ENCODE measurements at regions of chr16 and their contacts with region 1.

Region 1: GRCh38 chr16:75181630-75182029 is 25.3 kb downstream of the CTRB2 start:
- DNase-seq: no peak
- ATAC-seq: no peak
- H3K4me3 ChIP-seq: no peak overlapping the region
- H3K27ac ChIP-seq: no peak overlapping the region
- H3K4me1 ChIP-seq: no peaks in the 10 kb centered on the region; the same call in 1 of the 2 replicates
- H3K27me3 ChIP-seq: no peaks in the 10 kb centered on the region
- CTCF ChIP-seq: no peak
- EP300 ChIP-seq: no peak
- POLR2A ChIP-seq: no peak
- RAD21 ChIP-seq: no peak

Region 2: GRCh38 chr16:75152635-75153034 is 29.0 kb before region 1 on chr16:
- CTCF ChIA-PET with region 1: no interaction called
- POLR2A ChIA-PET with region 1: no interaction called
- RAD21 ChIA-PET with region 1: no interaction called
- SMC1A ChIA-PET with region 1: no interaction called
- in situ Hi-C with region 1: no loop called
- intact Hi-C with region 1: loop called (anchors 2 kb)
- DNase-seq: peak; percentile 53
- ATAC-seq: no peak; the same call in 2 of the 3 replicates
- H3K4me3 ChIP-seq: no peak overlapping the region; the same call in 1 of the 2 replicates
- H3K27ac ChIP-seq: peak overlapping the region; percentile 30; the same call in 1 of the 2 replicates
- H3K4me1 ChIP-seq: no peaks in the 10 kb centered on the region
- H3K27me3 ChIP-seq: no peaks in the 10 kb centered on the region
- CTCF ChIP-seq: no peak
- EP300 ChIP-seq: peak; percentile 22 to 73; a peak in 2 of 4 replicates
- POLR2A ChIP-seq: no peak
- RAD21 ChIP-seq: no peak

Region 3: DNA sequence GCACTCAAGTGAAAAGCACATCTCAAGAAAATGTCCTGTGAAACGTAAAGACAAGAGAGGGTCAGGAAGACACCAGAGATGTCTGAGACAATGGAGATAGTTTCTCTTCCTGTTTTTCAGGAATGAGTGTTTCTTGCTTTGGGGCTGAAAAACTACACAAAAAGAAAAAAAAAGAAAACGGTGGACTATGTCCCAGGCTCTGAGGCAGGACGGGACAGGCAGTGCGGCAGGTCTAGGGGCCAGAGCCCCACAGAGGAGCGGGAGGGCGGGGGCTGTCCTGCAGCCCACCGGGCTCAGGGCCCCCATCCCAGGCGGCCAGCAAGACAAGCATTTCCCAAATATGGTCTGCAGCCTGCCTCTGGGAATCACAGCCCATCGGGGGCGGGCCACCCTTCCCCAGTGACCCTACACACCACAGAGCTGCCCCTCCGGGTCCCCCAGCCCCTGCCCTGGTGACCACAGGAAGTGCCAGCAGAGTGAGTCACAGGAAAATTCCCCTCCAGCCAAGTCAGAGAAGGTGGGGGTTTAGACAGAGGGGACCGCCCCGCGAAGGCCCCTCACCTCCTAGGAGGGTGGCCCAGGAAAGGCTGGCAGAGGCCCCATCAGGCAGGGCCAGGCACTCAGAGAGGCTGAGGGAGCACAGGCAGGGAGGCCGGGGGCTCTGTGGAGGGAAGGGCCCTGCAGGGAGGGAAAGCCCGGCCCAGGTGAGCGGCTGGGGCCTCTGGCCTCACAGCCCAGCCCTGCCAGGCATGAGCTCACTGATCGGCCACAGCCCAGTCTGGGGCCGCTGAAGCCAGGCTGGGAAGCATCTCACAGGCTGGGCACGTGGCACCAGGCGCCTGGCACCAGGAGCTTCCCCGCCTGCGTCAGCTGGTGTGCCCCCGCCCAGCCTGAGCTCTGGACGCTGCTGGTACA is 63.5 kb after region 1 on chr16:
- CTCF ChIA-PET with region 1: no interaction called
- POLR2A ChIA-PET with region 1: no interaction called
- RAD21 ChIA-PET with region 1: no interaction called
- SMC1A ChIA-PET with region 1: no interaction called
- in situ Hi-C with region 1: no loop called
- intact Hi-C with region 1: no loop called
- DNase-seq: no peak
- ATAC-seq: peak; percentile 81
- H3K4me3 ChIP-seq: no peak overlapping the region
- H3K27ac ChIP-seq: peak overlapping the region; percentile 51; the same call in 1 of the 2 replicates
- H3K4me1 ChIP-seq: peaks cover 19% of the 10 kb centered on the region
- H3K27me3 ChIP-seq: no peaks in the 10 kb centered on the region
- CTCF ChIP-seq: no peak
- EP300 ChIP-seq: no peak
- POLR2A ChIP-seq: no peak
- RAD21 ChIP-seq: no peak